H1 (cell line): ENCODE measurements at regions of chr1 and their contacts with region 1.

Region 1: GRCh38 chr1:47738560-47739182 is 258.5 kb downstream of the TRABD2B start:
- DNase-seq: peak in 1 of 2 experiments; percentile 86
- H3K4me3 ChIP-seq: no peak overlapping the region
- H3K27ac ChIP-seq: no peak overlapping the region
- H3K4me1 ChIP-seq: no peaks in the 10 kb centered on the region
- H3K27me3 ChIP-seq: peaks cover 0 to 3% (median 1%) of the 10 kb centered on the region in 4 experiments; a peak in 2 of 7 replicates
- CTCF ChIP-seq: peak; percentile 77 to 88 (median 85)
- EP300 ChIP-seq: no peak
- POLR2A ChIP-seq: no peak
- RAD21 ChIP-seq: peak; percentile 85 to 89

Region 2: DNA sequence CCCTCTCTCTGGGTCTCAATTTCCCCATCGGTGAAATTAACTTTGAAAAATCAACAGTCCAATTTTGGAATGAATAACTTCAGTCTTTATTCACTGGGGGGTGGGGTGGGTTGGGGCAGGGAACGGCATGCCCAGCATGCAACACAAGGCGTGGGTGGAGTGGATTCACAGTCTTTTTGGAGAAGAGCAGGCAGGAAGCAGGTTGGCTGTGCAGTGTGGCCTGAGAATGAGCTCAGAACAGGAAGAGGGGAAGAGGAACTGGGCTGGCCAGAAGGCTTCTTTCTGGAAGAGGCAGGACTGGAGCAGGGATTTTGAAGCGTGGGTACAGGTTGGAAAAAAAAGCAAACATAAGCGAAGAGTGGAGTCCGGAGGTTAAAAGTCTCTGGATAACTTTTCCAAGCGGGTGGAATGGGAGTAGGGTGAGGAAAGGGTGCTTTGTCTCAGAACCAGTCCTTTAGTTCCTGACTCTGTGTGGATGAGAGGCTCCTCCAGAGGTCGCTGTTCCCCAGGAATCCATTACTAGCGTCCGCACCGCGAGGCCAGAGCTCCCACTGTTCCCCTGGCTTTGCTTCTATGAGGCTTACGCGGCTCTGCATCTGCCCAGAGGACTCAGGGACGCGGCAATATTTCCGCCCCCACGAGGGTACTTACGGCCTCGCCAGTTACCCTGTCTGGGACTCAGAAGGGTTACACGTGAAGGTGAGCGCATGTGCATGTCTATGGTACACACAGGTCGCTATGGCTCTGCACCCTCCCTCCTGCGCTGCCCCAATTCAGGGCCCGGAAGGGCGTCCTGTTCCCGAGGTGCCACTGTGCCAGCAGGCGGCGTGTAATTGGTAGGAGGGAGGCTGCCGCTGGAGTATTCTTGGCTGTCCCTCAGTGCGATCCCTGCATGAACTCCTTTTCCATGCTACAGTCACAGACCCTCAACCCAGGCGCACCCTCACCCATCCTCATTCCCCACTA is 306.3 kb before region 1 on chr1:
- CTCF ChIA-PET with region 1: no interaction called
- POLR2A ChIA-PET with region 1: no interaction called
- DNase-seq: peak; percentile 58 to 94
- H3K4me3 ChIP-seq: peak overlapping the region; percentile 28 to 54 (median 42); a peak in 7 of 8 replicates
- H3K27ac ChIP-seq: no peak overlapping the region
- H3K4me1 ChIP-seq: peaks cover 3 to 36% (median 15%) of the 10 kb centered on the region in 4 experiments; a peak in 6 of 7 replicates
- H3K27me3 ChIP-seq: peaks cover 65 to 99% (median 90%) of the 10 kb centered on the region in 4 experiments
- CTCF ChIP-seq: peak in 2 of 3 experiments; percentile 83 to 87; a peak in 3 of 4 replicates
- EP300 ChIP-seq: no peak
- POLR2A ChIP-seq: no peak
- RAD21 ChIP-seq: peak; percentile 79 to 83

Region 3: DNA sequence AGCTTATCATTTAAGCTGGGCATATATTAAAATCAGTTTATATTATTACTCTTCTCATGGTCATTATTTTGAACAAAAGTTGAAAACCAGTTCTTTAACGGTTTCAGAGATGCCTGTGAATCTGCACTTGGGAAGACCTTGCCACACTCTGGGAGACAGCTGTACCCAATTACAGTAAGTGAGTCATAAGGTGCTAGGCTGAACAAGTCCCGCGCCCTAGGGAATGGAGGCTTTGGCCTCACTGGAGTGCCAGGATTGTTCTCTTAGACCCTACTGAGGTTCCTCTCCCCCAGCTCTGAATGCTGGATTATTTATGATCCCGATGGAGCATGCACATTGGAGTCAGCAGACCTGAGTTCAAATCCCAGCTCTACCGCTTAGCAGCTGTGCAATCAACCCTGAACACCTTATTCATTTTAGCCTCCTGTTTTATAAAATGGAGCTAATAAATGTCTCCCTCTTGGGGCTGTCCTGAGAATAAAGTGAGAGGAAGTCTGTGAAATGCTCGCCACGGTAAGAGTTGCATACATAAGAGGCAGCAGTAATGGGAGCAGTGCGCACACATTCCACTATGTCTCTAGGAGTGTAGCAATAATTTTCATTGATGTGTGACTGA is 34.6 kb before region 1 on chr1:
- CTCF ChIA-PET with region 1: interaction called, 10 read pairs
- POLR2A ChIA-PET with region 1: no interaction called
- DNase-seq: no peak
- H3K4me3 ChIP-seq: no peak overlapping the region
- H3K27ac ChIP-seq: no peak overlapping the region
- H3K4me1 ChIP-seq: peaks cover 0 to 9% (median 1%) of the 10 kb centered on the region in 4 experiments; a peak in 3 of 7 replicates
- H3K27me3 ChIP-seq: peaks cover 19 to 34% (median 32%) of the 10 kb centered on the region in 4 experiments
- CTCF ChIP-seq: peak in 1 of 3 experiments; percentile 4; a peak in 1 of 4 replicates
- EP300 ChIP-seq: no peak
- POLR2A ChIP-seq: no peak
- RAD21 ChIP-seq: peak; percentile 20 to 42; a peak in 3 of 4 replicates

Region 4: GRCh38 chr1:47755101-47755990 is 16.7 kb after region 1 on chr1:
- CTCF ChIA-PET with region 1: interaction called, 53 read pairs
- POLR2A ChIA-PET with region 1: interaction called, 3 read pairs
- DNase-seq: peak; percentile 41 to 93
- H3K4me3 ChIP-seq: no peak overlapping the region
- H3K27ac ChIP-seq: no peak overlapping the region
- H3K4me1 ChIP-seq: no peaks in the 10 kb centered on the region; a peak in 1 of 7 replicates
- H3K27me3 ChIP-seq: peaks cover 0 to 2% (median 0%) of the 10 kb centered on the region in 4 experiments; a peak in 1 of 7 replicates
- CTCF ChIP-seq: peak; percentile 75 to 97 (median 95)
- EP300 ChIP-seq: no peak
- POLR2A ChIP-seq: no peak
- RAD21 ChIP-seq: peak; percentile 51 to 64